ENCODE measurements at regions of chr7 and their contacts with region 1.

Region 1: DNA sequence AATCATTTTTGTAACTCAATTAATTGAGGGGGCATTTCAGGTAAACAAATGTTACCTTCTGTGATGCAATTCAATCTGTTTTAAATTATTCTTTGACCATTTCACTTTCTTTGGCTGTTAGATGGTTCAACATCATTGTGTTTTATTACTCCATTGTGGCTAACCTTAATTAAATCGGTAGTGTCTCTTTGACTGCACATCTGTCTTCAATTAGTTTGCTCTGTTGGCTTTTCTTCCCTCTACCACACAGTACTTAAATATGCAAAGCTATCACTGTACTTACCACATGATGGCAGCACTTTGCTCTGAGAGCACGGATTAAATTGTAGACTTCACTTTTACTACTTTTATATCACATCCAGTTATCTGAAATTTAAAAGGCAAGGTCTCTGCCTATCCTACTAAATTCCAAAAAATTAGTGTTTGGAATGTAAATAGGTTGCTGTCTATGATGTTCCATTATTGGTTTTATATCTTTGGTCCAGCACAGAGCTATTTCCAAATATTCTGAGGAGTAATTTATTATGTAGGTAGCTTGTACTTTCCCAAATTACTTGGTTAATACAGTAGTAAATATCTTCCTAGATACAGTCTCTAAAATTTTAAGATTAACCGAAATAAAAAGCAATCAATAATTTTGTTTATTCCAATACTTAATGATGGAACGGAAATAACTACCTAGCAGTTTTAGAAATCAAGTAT is 352.0 kb downstream of the PCLO start:
- DNase-seq: peak; percentile 30
- H3K4me3 ChIP-seq: no peak overlapping the region
- H3K27ac ChIP-seq: no peak overlapping the region
- H3K4me1 ChIP-seq: no peaks in the 10 kb centered on the region
- H3K27me3 ChIP-seq: no peaks in the 10 kb centered on the region
- CTCF ChIP-seq: peak; percentile 10 to 65 (median 54)
- POLR2A ChIP-seq: no peak

Region 2: GRCh38 chr7:80826520-80827238 is 1984.0 kb before region 1 on chr7:
- intact Hi-C with region 1: no loop called
- DNase-seq: no peak
- H3K4me3 ChIP-seq: no peak overlapping the region
- H3K27ac ChIP-seq: peak overlapping the region in 1 of 2 donors; percentile 2
- H3K4me1 ChIP-seq: no peaks in the 10 kb centered on the region
- H3K27me3 ChIP-seq: no peaks in the 10 kb centered on the region
- CTCF ChIP-seq: no peak
- POLR2A ChIP-seq: no peak

Region 3: DNA sequence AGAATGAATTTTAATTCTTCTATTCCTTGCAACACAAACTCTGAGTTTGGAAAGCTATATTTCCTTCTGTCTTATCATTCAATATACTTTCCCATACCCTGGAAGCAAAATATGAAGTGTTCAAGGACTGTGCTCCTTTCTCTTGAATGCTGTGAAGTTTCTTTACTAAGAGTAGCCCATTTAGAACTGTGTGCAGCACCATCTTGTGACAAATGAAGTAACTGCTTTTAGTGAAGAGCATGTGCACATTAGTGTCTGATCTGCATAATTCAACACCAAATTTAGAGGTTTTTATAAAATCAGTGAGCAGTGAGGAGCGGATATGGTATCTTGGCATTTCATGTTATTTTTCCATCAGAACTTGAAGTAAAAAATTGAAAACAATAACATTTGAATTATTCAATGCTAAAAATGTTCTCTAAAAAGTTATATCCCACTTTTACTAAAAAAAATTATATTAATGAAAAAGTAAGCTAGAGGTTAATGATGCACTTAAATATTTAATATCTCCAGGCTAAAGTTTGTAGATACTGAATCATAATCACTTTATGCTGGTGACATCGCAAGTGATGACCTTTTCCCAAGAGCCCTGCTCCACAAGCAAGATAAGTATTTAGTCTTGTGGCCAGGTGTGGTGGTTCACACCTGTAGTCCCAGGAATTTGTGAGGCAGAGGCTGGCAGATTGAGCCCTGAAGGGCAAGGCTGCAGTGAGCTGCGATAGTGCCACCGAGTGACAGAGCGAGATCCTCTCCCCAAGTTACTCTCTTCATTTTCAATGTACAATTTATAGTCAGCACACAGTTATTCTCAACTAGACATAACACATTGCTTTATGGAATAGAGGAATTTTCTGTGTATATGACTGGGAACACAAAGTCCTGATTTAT is 460.7 kb after region 1 on chr7:
- intact Hi-C with region 1: loop called (anchors 5 kb)
- DNase-seq: no peak
- H3K4me3 ChIP-seq: no peak overlapping the region
- H3K27ac ChIP-seq: no peak overlapping the region
- H3K4me1 ChIP-seq: no peaks in the 10 kb centered on the region
- H3K27me3 ChIP-seq: no peaks in the 10 kb centered on the region
- CTCF ChIP-seq: peak in 3 of 4 experiments; percentile 19 to 60 (median 56)
- POLR2A ChIP-seq: no peak